MCF 10A (cell line): ENCODE measurements at regions of chr13 and their contacts with region 1.

Region 1: GRCh38 chr13:101757446-101758039 is 305.1 kb downstream of the ITGBL1 start:
- DNase-seq: peak; percentile 56
- H3K4me3 Mint-ChIP-seq: no peak overlapping the region
- H3K27ac Mint-ChIP-seq: no peak overlapping the region
- H3K4me1 Mint-ChIP-seq: no peaks in the 10 kb centered on the region
- H3K27me3 Mint-ChIP-seq: no peaks in the 10 kb centered on the region
- CTCF ChIP-seq: peak; percentile 69

Region 2: DNA sequence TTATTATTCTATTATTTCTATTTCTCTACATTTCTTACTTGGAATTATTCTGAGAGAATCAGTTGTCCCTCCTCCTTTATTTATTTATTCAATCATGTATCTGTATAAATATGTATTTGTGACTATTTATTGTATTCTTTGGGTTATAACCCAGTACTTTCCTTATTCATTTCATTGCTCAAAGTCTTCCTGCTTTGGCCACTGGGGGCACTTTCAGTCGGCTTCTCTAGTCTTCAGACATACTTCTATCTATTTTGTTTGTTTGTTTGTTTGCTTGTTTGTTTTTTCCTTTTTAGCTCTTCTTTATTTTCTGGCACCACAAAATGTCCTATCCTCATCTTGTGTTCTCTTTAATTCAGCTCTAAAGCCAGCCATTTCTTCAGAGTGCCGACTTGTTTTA is 601.6 kb before region 1 on chr13:
- CTCF ChIA-PET with region 1: interaction called, 10 read pairs
- POLR2A ChIA-PET with region 1: no interaction called
- intact Hi-C with region 1: no loop called
- DNase-seq: peak; percentile 20
- H3K4me3 Mint-ChIP-seq: no peak overlapping the region
- H3K27ac Mint-ChIP-seq: no peak overlapping the region
- H3K4me1 Mint-ChIP-seq: peaks cover 3% of the 10 kb centered on the region
- H3K27me3 Mint-ChIP-seq: no peaks in the 10 kb centered on the region
- CTCF ChIP-seq: peak; percentile 29

Region 3: GRCh38 chr13:101520672-101521071 is 236.9 kb before region 1 on chr13:
- CTCF ChIA-PET with region 1: interaction called, 56 read pairs
- POLR2A ChIA-PET with region 1: interaction called, 4 read pairs
- intact Hi-C with region 1: no loop called
- DNase-seq: peak; percentile 23
- H3K4me3 Mint-ChIP-seq: no peak overlapping the region
- H3K27ac Mint-ChIP-seq: peak overlapping the region; percentile 0
- H3K4me1 Mint-ChIP-seq: peaks cover 10% of the 10 kb centered on the region
- H3K27me3 Mint-ChIP-seq: no peaks in the 10 kb centered on the region
- CTCF ChIP-seq: no peak

Region 4: GRCh38 chr13:101700598-101700997 is 56.9 kb before region 1 on chr13:
- CTCF ChIA-PET with region 1: interaction called, 10 read pairs
- POLR2A ChIA-PET with region 1: interaction called, 4 read pairs
- intact Hi-C with region 1: no loop called
- DNase-seq: peak; percentile 72
- H3K4me3 Mint-ChIP-seq: no peak overlapping the region
- H3K27ac Mint-ChIP-seq: peak overlapping the region; percentile 94
- H3K4me1 Mint-ChIP-seq: peaks cover 41% of the 10 kb centered on the region
- H3K27me3 Mint-ChIP-seq: no peaks in the 10 kb centered on the region
- CTCF ChIP-seq: no peak

Region 5: GRCh38 chr13:102183509-102184182 is 426.1 kb after region 1 on chr13:
- CTCF ChIA-PET with region 1: no interaction called
- POLR2A ChIA-PET with region 1: no interaction called
- intact Hi-C with region 1: no loop called
- DNase-seq: no peak
- H3K4me3 Mint-ChIP-seq: no peak overlapping the region
- H3K27ac Mint-ChIP-seq: no peak overlapping the region
- H3K4me1 Mint-ChIP-seq: no peaks in the 10 kb centered on the region
- H3K27me3 Mint-ChIP-seq: no peaks in the 10 kb centered on the region
- CTCF ChIP-seq: no peak